ENCODE measurements at regions of chr11 and their contacts with region 1.

Region 1: GRCh38 chr11:14148653-14149273 is 186.2 kb downstream of the SPON1 start:
- DNase-seq: peak; percentile 29
- ATAC-seq: peak; percentile 98
- H3K4me3 ChIP-seq: no peak overlapping the region
- H3K27ac ChIP-seq: no peak overlapping the region
- H3K4me1 ChIP-seq: no peaks in the 10 kb centered on the region
- H3K27me3 ChIP-seq: 0 out of 2 replicates have a peak, but pooled peaks cover 7% of the 10 kb centered on the region
- CTCF ChIP-seq: peak; percentile 56 to 73 (median 70)
- POLR2A ChIP-seq: no peak
- RAD21 ChIP-seq: peak; percentile 79

Region 2: DNA sequence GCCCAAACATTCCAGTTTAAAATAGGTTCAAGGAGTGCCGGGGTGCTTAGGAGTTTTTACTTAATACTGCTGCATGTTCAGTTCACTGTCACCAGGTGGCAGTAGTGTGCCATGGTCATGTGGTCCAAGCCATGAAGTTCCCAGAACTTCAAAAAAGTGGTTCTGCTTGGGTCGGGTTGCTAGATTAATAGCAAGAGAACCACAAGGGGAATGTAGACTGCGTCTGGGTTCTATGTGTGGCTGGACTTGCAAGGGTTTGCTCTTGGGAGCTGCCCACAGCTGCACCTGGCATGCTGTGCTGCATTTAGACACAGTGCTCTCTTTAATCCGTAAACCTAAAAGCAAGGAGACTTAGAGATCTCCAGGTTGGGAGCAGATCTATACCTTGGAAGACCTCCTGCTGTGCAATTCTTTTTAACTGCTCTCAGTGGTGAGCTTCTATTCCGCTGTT is 192.8 kb before region 1 on chr11:
- CTCF ChIA-PET with region 1: interaction called, 35 read pairs
- POLR2A ChIA-PET with region 1: no interaction called
- RAD21 ChIA-PET with region 1: interaction called in 1 of 2 experiments, 7 read pairs
- intact Hi-C with region 1: loop called (anchors 1 kb)
- DNase-seq: peak; percentile 54
- ATAC-seq: peak; percentile 84
- H3K4me3 ChIP-seq: no peak overlapping the region
- H3K27ac ChIP-seq: no peak overlapping the region
- H3K4me1 ChIP-seq: peaks cover 0 to 5% of the 10 kb centered on the region in 2 experiments; a peak in 1 of 4 replicates
- H3K27me3 ChIP-seq: peaks cover 25% of the 10 kb centered on the region; the same call in 1 of the 2 replicates
- CTCF ChIP-seq: peak; percentile 74 to 90 (median 86)
- POLR2A ChIP-seq: no peak
- RAD21 ChIP-seq: peak; percentile 92

Region 3: DNA sequence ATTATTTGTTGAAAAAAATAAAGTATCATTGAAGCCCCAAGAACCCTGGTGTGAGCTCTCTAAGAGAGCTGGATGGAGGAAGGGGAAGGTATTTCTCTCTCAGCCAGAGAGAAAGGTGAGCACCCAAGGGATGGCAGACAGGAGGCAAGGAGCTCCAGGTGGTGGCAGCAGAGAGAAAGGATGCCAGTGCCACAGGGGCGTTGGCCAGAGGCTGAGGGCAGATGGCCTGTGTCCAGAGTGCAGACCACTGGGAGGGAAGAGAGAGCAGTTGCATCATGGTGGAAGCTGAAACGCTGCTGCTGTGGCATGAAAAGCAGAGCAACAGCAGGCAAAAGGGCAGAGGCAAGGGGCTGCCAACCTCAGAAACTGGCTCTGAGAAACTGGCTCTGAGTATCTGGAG is 177.8 kb before region 1 on chr11:
- CTCF ChIA-PET with region 1: interaction called, 33 read pairs
- POLR2A ChIA-PET with region 1: no interaction called
- RAD21 ChIA-PET with region 1: no interaction called
- intact Hi-C with region 1: loop called (anchors 2 kb)
- DNase-seq: peak; percentile 24
- ATAC-seq: peak; percentile 99
- H3K4me3 ChIP-seq: no peak overlapping the region
- H3K27ac ChIP-seq: no peak overlapping the region
- H3K4me1 ChIP-seq: no peaks in the 10 kb centered on the region
- H3K27me3 ChIP-seq: peaks cover 9% of the 10 kb centered on the region; the same call in 1 of the 2 replicates
- CTCF ChIP-seq: peak; percentile 69 to 76 (median 76)
- POLR2A ChIP-seq: no peak
- RAD21 ChIP-seq: peak; percentile 86

Region 4: DNA sequence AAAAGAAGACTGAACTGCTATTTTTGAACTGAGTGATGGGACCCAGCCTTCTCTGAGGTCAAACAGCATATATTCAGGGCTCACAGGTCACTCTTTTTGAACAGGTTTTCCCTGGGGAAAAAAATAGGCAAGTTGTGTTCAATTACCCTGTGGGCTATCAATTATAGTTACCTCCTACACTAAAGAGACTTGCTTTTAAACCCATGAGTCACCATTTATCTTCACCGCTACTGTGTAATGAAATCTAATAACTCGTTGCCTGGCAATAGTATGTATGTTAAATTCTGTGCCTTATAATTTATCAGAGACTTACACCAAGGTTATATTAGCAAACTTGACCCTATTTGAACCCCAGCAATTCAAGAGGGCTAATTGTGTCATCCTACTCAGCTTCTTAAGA is 644.8 kb after region 1 on chr11:
- CTCF ChIA-PET with region 1: no interaction called
- POLR2A ChIA-PET with region 1: no interaction called
- RAD21 ChIA-PET with region 1: no interaction called
- intact Hi-C with region 1: no loop called
- DNase-seq: no peak
- ATAC-seq: no peak
- H3K4me3 ChIP-seq: no peak overlapping the region
- H3K27ac ChIP-seq: no peak overlapping the region
- H3K4me1 ChIP-seq: no peaks in the 10 kb centered on the region
- H3K27me3 ChIP-seq: no peaks in the 10 kb centered on the region
- CTCF ChIP-seq: no peak
- POLR2A ChIP-seq: no peak
- RAD21 ChIP-seq: no peak